Activated CD4-positive, alpha-beta memory T cell treated with anti-CD3 and anti-CD28 coated beads for 36 hours (primary cell): ENCODE measurements at regions of chr17 and their contacts with region 1.

Region 1: GRCh38 chr17:31388770-31389661 is 2.5 kb upstream of the RAB11FIP4 start:
- DNase-seq: peak; percentile 57
- H3K4me3 Mint-ChIP-seq: no peak overlapping the region
- H3K27ac Mint-ChIP-seq: no peak overlapping the region
- H3K4me1 Mint-ChIP-seq: no peaks in the 10 kb centered on the region
- H3K27me3 Mint-ChIP-seq: peaks cover 31% of the 10 kb centered on the region

Region 2: DNA sequence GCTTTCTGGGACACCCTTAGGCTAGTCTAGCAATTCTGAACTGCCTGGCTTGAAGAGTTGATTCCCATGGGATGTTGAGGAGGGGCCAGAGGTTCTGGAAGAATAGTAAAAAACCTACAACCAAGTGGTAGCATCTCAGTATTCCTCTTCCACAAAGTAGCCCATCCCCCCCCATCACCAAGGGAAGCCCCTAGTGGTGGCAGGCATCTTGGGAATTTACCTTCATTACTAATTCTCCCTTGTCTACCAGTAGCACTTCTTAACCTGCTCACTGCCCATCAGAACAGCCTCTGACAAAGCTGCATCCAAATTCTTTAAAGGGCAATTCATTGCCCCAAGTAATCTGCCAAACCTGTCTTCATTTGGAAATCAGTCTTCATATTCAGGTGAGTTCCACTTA is 10.4 kb before region 1 on chr17:
- CTCF ChIA-PET with region 1: interaction called, 10 read pairs
- POLR2A ChIA-PET with region 1: no interaction called
- intact Hi-C with region 1: no loop called
- DNase-seq: no peak
- H3K4me3 Mint-ChIP-seq: no peak overlapping the region
- H3K27ac Mint-ChIP-seq: no peak overlapping the region
- H3K4me1 Mint-ChIP-seq: no peaks in the 10 kb centered on the region
- H3K27me3 Mint-ChIP-seq: no peaks in the 10 kb centered on the region

Region 3: GRCh38 chr17:31427684-31428083 is 38.7 kb after region 1 on chr17:
- CTCF ChIA-PET with region 1: no interaction called
- POLR2A ChIA-PET with region 1: no interaction called
- intact Hi-C with region 1: no loop called
- DNase-seq: no peak
- H3K4me3 Mint-ChIP-seq: no peak overlapping the region
- H3K27ac Mint-ChIP-seq: no peak overlapping the region
- H3K4me1 Mint-ChIP-seq: no peaks in the 10 kb centered on the region
- H3K27me3 Mint-ChIP-seq: peaks cover 9% of the 10 kb centered on the region

Region 4: DNA sequence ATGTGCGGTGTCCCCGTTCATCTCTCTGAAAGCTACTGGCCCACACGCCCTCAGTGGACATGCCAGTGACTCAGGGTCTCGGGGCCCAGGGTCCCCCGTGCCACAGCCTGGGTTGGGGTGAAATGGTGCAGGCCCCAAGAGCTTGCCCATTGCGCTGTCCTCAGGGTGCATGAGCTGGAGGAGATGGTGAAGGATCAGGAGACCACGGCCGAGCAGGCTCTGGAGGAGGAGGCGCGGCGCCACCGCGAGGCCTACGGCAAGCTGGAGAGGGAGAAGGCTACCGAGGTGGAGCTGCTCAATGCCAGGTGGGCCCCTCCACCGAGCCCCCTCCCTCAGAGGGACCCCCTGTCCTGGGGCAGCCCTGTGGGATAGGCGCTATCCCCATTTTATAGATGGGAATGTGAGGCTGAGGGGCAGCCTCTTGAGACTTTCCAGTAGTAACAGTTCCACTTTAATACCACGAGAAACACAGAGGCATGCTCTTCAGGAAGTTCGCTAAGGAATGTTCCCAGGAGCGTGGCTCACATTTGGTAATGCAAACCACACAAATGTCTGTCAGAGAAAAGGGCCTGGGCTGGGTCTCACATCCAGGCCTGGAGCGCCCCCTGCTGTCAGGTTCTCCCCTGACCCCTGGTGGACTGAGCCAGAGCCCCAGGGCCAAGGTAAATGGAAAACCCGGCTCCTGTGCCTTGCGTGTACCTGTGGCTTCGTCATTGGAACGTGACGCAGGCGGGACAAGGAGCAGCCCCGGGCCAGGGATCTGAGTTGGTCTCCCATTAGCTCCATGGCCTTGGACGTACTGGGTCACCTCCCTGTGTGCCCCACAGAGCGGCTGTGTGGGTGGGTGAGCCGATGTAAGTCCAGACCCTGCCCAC is 136.1 kb after region 1 on chr17:
- CTCF ChIA-PET with region 1: interaction called, 39 read pairs
- POLR2A ChIA-PET with region 1: no interaction called
- intact Hi-C with region 1: loop called (anchors 2 kb)
- DNase-seq: peak; percentile 88
- H3K4me3 Mint-ChIP-seq: no peak overlapping the region
- H3K27ac Mint-ChIP-seq: no peak overlapping the region
- H3K4me1 Mint-ChIP-seq: no peaks in the 10 kb centered on the region
- H3K27me3 Mint-ChIP-seq: no peaks in the 10 kb centered on the region